A549 (cell line): ENCODE measurements at regions of chr7 and their contacts with region 1.

Region 1: GRCh38 chr7:158976849-158977593 is 120.7 kb downstream of the DYNC2I1 start:
- DNase-seq: peak; percentile 67 to 72
- ATAC-seq: peak; percentile 77 to 88
- H3K4me3 ChIP-seq: 0 out of 3 replicates have a peak overlapping the region, but pooled peaks have one; percentile 14
- H3K27ac ChIP-seq: peak overlapping the region; percentile 29 to 46; a peak in 5 of 6 replicates
- H3K4me1 ChIP-seq: no peaks in the 10 kb centered on the region
- CTCF ChIP-seq: peak; percentile 75
- EP300 ChIP-seq: no peak
- POLR2A ChIP-seq: no peak
- RAD21 ChIP-seq: peak; percentile 75 to 82

Region 2: GRCh38 chr7:158587162-158588084 is 389.6 kb before region 1 on chr7 and contains the start of gene PTPRN2:
- CTCF ChIA-PET with region 1: no interaction called
- POLR2A ChIA-PET with region 1: no interaction called
- DNase-seq: peak; percentile 47 to 58
- ATAC-seq: peak; percentile 66 to 68
- H3K4me3 ChIP-seq: peak within 1 kb of the TSS; percentile 47
- H3K27ac ChIP-seq: no peak within 1 kb of the TSS
- H3K4me1 ChIP-seq: peaks cover 7% of the 10 kb centered on the region; the same call in 1 of the 3 replicates
- CTCF ChIP-seq: no peak
- EP300 ChIP-seq: no peak
- POLR2A ChIP-seq: no peak
- RAD21 ChIP-seq: no peak
- polyA plus RNA-seq, gene PTPRN2: 1.2 and 1.5 TPM in 2 replicates

Region 3: GRCh38 chr7:158695726-158696452 is 281.1 kb before region 1 on chr7:
- CTCF ChIA-PET with region 1: interaction called, 111 read pairs
- POLR2A ChIA-PET with region 1: no interaction called
- DNase-seq: peak; percentile 51 to 76
- ATAC-seq: peak; percentile 96
- H3K4me3 ChIP-seq: no peak overlapping the region
- H3K27ac ChIP-seq: peak overlapping the region; percentile 10 to 18; a peak in 3 of 6 replicates
- H3K4me1 ChIP-seq: peaks cover 6% of the 10 kb centered on the region; the same call in 2 of the 3 replicates
- CTCF ChIP-seq: peak; percentile 65
- EP300 ChIP-seq: no peak
- POLR2A ChIP-seq: no peak
- RAD21 ChIP-seq: peak; percentile 71 to 75

Region 4: DNA sequence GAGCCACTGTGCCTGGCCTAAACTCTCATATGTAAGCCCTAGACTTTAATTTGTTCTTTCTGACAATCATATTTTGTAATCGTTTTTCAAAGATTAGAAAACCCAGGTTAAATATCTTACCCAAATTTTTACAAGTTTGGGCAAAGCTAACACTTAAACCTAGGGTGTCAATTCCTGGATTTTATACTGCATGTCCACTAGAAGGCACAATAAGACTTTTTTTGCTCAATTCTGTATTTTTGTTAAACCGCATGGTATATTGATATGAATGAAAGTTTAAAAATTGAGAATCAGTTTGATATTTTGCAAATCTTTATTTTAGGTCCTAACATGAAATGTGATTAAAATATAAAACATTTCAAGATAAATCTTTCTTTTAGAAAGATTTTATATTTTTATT is 91.4 kb before region 1 on chr7:
- CTCF ChIA-PET with region 1: interaction called, 12 read pairs
- POLR2A ChIA-PET with region 1: no interaction called
- DNase-seq: peak; percentile 41 to 54
- ATAC-seq: peak in 1 of 2 experiments; percentile 55; a peak in 2 of 6 replicates
- H3K4me3 ChIP-seq: no peak overlapping the region
- H3K27ac ChIP-seq: no peak overlapping the region
- H3K4me1 ChIP-seq: no peaks in the 10 kb centered on the region
- CTCF ChIP-seq: peak; percentile 65
- EP300 ChIP-seq: no peak
- POLR2A ChIP-seq: no peak
- RAD21 ChIP-seq: peak; percentile 71 to 77

Region 5: DNA sequence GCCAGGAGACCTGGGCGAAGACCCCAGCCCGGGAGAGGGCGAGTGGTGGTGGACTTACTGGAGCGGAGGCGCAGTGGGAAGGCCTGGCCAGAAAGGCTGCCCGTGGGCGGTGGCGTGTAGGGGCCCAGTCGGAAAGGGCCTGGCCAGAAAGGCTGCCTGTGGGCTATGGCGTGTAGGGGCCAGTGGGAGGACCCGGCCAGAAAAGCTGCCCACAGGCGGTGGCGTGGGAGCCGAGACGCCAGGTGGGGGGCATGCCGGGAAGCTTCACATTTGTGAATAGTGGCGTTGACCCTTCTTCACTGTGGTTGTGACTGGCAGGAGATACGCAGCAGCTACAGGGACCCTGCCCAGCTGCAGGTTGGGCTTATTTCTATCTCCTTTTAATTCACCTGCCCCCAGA is 47.7 kb before region 1 on chr7:
- CTCF ChIA-PET with region 1: no interaction called
- POLR2A ChIA-PET with region 1: no interaction called
- DNase-seq: no peak
- ATAC-seq: no peak
- H3K4me3 ChIP-seq: no peak overlapping the region
- H3K27ac ChIP-seq: no peak overlapping the region
- H3K4me1 ChIP-seq: no peaks in the 10 kb centered on the region
- CTCF ChIP-seq: no peak
- EP300 ChIP-seq: no peak
- POLR2A ChIP-seq: no peak
- RAD21 ChIP-seq: no peak

Region 6: GRCh38 chr7:158958618-158959356 is 18.2 kb before region 1 on chr7:
- CTCF ChIA-PET with region 1: interaction called, 18 read pairs
- POLR2A ChIA-PET with region 1: no interaction called
- DNase-seq: no peak
- ATAC-seq: no peak
- H3K4me3 ChIP-seq: no peak overlapping the region
- H3K27ac ChIP-seq: no peak overlapping the region
- H3K4me1 ChIP-seq: no peaks in the 10 kb centered on the region
- CTCF ChIP-seq: no peak
- EP300 ChIP-seq: no peak
- POLR2A ChIP-seq: no peak
- RAD21 ChIP-seq: no peak

Region 7: GRCh38 chr7:158991824-158992583 is 15.0 kb after region 1 on chr7:
- CTCF ChIA-PET with region 1: interaction called, 14 read pairs
- POLR2A ChIA-PET with region 1: no interaction called
- DNase-seq: no peak
- ATAC-seq: no peak
- H3K4me3 ChIP-seq: no peak overlapping the region
- H3K27ac ChIP-seq: no peak overlapping the region
- H3K4me1 ChIP-seq: 0 out of 3 replicates have a peak, but pooled peaks cover 3% of the 10 kb centered on the region
- CTCF ChIP-seq: no peak
- EP300 ChIP-seq: no peak
- POLR2A ChIP-seq: no peak
- RAD21 ChIP-seq: no peak

Region 8: GRCh38 chr7:159030490-159031134 is 53.6 kb after region 1 on chr7:
- CTCF ChIA-PET with region 1: interaction called, 11 read pairs
- POLR2A ChIA-PET with region 1: no interaction called
- DNase-seq: peak; percentile 69 to 83
- ATAC-seq: peak; percentile 92 to 96
- H3K4me3 ChIP-seq: peak overlapping the region; percentile 53
- H3K27ac ChIP-seq: peak overlapping the region; percentile 85 to 91
- H3K4me1 ChIP-seq: peaks cover 18% of the 10 kb centered on the region
- CTCF ChIP-seq: peak; percentile 39
- EP300 ChIP-seq: no peak
- POLR2A ChIP-seq: no peak; the same call in 1 of the 2 replicates
- RAD21 ChIP-seq: peak in 1 of 2 experiments; percentile 52; a peak in 4 of 5 replicates

Region 9: DNA sequence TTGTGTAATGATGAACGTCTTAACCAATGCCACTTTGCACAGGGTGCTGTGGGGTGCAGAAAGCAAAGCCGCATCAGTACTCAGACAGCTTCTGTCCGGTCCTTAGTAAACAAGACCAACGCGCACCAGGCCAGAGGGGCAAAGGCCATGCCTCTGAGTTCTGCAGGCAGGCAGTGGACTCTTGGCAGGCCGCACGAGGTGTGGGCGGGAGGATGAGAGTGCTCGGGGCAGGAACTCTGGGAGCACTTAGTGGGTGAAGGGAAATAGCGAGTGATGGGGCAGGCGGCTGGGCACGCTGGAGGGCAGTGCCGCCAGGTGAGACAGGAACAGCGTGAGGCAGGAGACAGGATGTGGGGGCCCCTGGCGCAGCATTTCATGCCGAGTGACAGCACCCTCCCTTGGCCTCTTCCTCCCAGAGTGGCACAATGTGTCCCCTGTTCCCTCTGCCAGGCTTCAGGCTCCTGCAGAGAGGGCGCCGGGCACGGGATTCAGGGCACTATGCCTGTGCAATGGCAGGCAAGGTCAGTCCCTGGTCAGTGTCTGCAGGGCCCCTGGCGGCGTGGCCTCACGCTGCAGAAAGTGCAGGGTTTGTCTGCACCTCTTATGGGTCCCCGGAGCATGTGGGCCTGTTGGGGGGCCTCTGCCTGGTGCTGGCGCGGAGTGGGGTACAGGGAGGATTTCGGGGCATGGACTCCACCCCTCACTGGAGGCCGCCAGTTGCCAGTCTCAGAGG is 107.2 kb after region 1 on chr7:
- CTCF ChIA-PET with region 1: no interaction called
- POLR2A ChIA-PET with region 1: no interaction called
- DNase-seq: no peak
- ATAC-seq: no peak; a peak in 1 of 6 replicates
- H3K4me3 ChIP-seq: no peak overlapping the region
- H3K27ac ChIP-seq: no peak overlapping the region
- H3K4me1 ChIP-seq: no peaks in the 10 kb centered on the region
- CTCF ChIP-seq: no peak
- EP300 ChIP-seq: no peak
- POLR2A ChIP-seq: no peak
- RAD21 ChIP-seq: no peak